ENCODE measurements at regions of chr12 and their contacts with region 1.

Region 1: GRCh38 chr12:25195056-25195971 is at the starts of genes DNAI7 and ETFRF1:
- DNase-seq: peak; percentile 98
- ATAC-seq: peak; percentile 97
- H3K4me3 ChIP-seq: peak within 1 kb of the TSS; percentile 83 to 94 (median 93)
- H3K4me3 Mint-ChIP-seq: peak within 1 kb of the TSS; percentile 98
- H3K27ac ChIP-seq: peak within 1 kb of the TSS; percentile 92 to 95
- H3K27ac Mint-ChIP-seq: peak within 1 kb of the TSS; percentile 97
- H3K4me1 ChIP-seq: peaks cover 14 to 18% of the 10 kb centered on the region in 2 donors
- H3K4me1 Mint-ChIP-seq: peaks cover 40% of the 10 kb centered on the region
- H3K27me3 ChIP-seq: no peaks in the 10 kb centered on the region
- H3K27me3 Mint-ChIP-seq: no peaks in the 10 kb centered on the region
- CTCF ChIP-seq: no peak
- total RNA-seq, gene DNAI7: 0.39 and 0.62 TPM in 2 replicates
- total RNA-seq, gene ETFRF1: 26.1 and 26.9 TPM in 2 replicates

Region 2: DNA sequence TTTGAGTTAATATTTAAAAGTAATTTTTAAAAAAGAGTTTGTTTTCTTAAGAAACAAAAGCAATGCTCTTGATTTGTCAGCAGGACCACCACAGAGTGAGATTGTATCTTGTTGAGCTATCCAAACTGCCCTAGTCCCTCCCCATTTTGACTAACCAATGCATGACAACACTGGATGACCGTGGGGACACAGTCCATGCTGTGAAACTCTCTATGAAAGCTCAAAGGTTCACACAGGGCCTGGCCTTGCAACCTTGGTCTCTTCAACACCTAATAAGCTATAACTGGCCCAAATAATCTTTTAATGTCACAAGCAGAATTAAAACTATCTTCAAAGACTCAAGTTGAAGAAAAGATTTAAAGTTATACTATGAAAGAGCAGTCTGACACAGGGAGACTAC is 13.2 kb after region 1 on chr12:
- CTCF ChIA-PET with region 1: interaction called, 4 read pairs
- POLR2A ChIA-PET with region 1: no interaction called
- intact Hi-C with region 1: loop called (anchors 2 kb)
- DNase-seq: no peak
- ATAC-seq: no peak
- H3K4me3 ChIP-seq: no peak overlapping the region
- H3K4me3 Mint-ChIP-seq: no peak overlapping the region
- H3K27ac ChIP-seq: no peak overlapping the region
- H3K27ac Mint-ChIP-seq: no peak overlapping the region
- H3K4me1 ChIP-seq: no peaks in the 10 kb centered on the region
- H3K4me1 Mint-ChIP-seq: no peaks in the 10 kb centered on the region
- H3K27me3 ChIP-seq: no peaks in the 10 kb centered on the region
- H3K27me3 Mint-ChIP-seq: no peaks in the 10 kb centered on the region
- CTCF ChIP-seq: no peak

Region 3: DNA sequence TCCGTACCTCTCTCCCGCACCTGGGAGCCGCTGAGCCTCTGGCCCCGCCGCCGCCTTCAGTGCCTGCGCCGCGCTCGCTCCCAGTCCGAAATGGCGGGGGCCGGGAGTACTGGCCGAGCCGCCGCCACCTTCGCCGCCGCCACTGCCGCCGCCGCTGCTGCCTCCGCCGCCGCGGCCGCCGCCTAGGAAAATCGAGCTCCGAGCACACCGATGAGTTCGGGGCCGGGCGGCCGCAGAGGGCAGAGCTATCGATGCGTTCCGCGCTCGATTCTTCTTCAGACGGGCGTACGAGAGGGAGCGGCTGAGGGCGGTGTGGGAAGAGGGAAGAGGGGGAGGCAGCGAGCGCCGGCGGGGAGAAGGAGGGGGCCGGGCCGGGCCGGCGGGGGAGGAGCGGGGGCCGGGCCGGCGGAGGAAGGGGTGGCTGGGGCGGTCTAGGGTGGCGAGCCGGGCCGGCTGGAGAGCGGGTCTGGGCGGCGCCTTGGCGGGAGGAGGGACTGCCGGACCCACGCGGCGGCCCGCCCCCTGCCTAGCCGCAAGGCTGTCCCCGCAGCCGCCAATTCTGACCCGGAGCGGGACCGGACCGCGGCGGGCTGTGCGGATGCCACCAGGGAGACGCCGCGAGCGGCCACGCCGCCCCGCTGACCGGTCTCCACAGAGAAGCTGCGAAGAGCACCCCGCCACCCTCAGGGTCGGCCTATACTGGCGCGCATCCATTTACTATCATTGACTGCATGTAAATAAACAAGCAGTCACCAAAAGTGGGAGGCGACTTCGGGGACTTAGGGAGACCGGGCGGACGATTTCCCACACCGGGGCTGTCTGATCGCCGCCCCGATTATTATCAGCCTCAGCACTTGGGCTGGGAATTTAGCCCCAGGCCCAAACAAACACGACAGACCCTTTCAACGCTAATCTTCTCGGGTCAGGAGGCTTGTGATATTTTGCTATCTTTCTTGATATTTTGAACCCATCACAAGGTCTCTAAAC is 55.7 kb after region 1 on chr12 and contains the start of gene KRAS:
- CTCF ChIA-PET with region 1: no interaction called
- POLR2A ChIA-PET with region 1: interaction called, 5 read pairs
- intact Hi-C with region 1: loop called (anchors 1 kb)
- DNase-seq: peak; percentile 96
- ATAC-seq: peak; percentile 80
- H3K4me3 ChIP-seq: peak within 1 kb of the TSS; percentile 59 to 94 (median 74)
- H3K4me3 Mint-ChIP-seq: peak within 1 kb of the TSS; percentile 96
- H3K27ac ChIP-seq: peak within 1 kb of the TSS; percentile 61 to 89
- H3K27ac Mint-ChIP-seq: peak within 1 kb of the TSS; percentile 99
- H3K4me1 ChIP-seq: peaks cover 25 to 42% of the 10 kb centered on the region in 2 donors
- H3K4me1 Mint-ChIP-seq: peaks cover 48% of the 10 kb centered on the region
- H3K27me3 ChIP-seq: no peaks in the 10 kb centered on the region
- H3K27me3 Mint-ChIP-seq: no peaks in the 10 kb centered on the region
- CTCF ChIP-seq: no peak
- total RNA-seq, gene KRAS: 40.7 and 41.8 TPM in 2 replicates

Region 4: DNA sequence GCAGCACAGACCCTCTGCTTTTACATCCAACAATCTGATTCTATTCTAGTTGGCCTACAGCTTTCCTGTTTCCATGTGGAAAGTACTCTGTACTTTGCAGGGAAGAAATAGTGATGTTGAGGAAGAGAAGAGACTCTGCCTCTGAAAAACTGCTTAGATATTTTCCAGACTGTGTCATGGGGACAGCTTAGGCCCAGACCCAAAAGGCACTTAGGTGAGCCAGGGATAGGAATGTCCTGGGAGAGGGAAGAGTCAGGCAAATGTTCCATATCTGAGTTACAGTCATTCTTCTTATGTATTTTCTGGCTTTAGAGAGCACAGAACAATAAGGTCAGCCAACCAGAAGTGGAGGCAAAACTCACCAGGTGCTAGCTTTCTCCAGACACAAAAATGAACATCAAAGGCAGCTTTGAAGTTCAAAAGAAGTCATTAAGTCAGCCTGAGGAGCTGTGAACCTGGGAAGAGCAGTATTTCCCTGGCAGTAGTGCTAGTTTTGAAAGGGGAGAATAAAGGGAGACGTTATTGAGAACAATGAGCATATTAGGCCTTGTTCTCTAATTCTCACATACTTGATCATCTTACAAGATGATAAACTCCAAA is 557.5 kb after region 1 on chr12:
- CTCF ChIA-PET with region 1: no interaction called
- POLR2A ChIA-PET with region 1: no interaction called
- intact Hi-C with region 1: no loop called
- DNase-seq: no peak
- ATAC-seq: no peak
- H3K4me3 ChIP-seq: no peak overlapping the region
- H3K4me3 Mint-ChIP-seq: no peak overlapping the region
- H3K27ac ChIP-seq: no peak overlapping the region
- H3K27ac Mint-ChIP-seq: no peak overlapping the region
- H3K4me1 ChIP-seq: no peaks in the 10 kb centered on the region
- H3K4me1 Mint-ChIP-seq: no peaks in the 10 kb centered on the region
- H3K27me3 ChIP-seq: peaks cover 0 to 4% (median 0%) of the 10 kb centered on the region in 4 experiments
- H3K27me3 Mint-ChIP-seq: peaks cover 5% of the 10 kb centered on the region
- CTCF ChIP-seq: no peak

Region 5: GRCh38 chr12:26937875-26938700 is 1742.8 kb after region 1 on chr12 and contains the starts of genes FGFR1OP2 and INTS13:
- CTCF ChIA-PET with region 1: no interaction called
- POLR2A ChIA-PET with region 1: no interaction called
- intact Hi-C with region 1: loop called (anchors 10 kb)
- DNase-seq: peak; percentile 97
- ATAC-seq: peak; percentile 91
- H3K4me3 ChIP-seq: peak within 1 kb of the TSS; percentile 72 to 100 (median 98)
- H3K4me3 Mint-ChIP-seq: peak within 1 kb of the TSS; percentile 99
- H3K27ac ChIP-seq: peak within 1 kb of the TSS; percentile 88 to 96
- H3K27ac Mint-ChIP-seq: peak within 1 kb of the TSS; percentile 99
- H3K4me1 ChIP-seq: peaks cover 18 to 57% of the 10 kb centered on the region in 2 donors
- H3K4me1 Mint-ChIP-seq: peaks cover 64% of the 10 kb centered on the region
- H3K27me3 ChIP-seq: no peaks in the 10 kb centered on the region
- H3K27me3 Mint-ChIP-seq: no peaks in the 10 kb centered on the region
- CTCF ChIP-seq: no peak
- total RNA-seq, gene FGFR1OP2: 64.3 and 67.3 TPM in 2 replicates
- total RNA-seq, gene INTS13: 15.6 and 16.2 TPM in 2 replicates